CD4-positive, alpha-beta memory T cell (primary cell): ENCODE measurements at regions of chr11 and their contacts with region 1.

Region 1: GRCh38 chr11:63838678-63839507 is at the start of gene MARK2:
- DNase-seq: peak; percentile 99 to 100 (median 99)
- H3K4me3 ChIP-seq: peak within 1 kb of the TSS; percentile 87 to 88
- H3K4me3 Mint-ChIP-seq: peak within 1 kb of the TSS; percentile 87 to 95 (median 91)
- H3K27ac ChIP-seq: peak within 1 kb of the TSS; percentile 86
- H3K27ac Mint-ChIP-seq: peak within 1 kb of the TSS; percentile 85 to 97 (median 95)
- H3K4me1 ChIP-seq: peaks cover 48% of the 10 kb centered on the region
- H3K4me1 Mint-ChIP-seq: peaks cover 40 to 72% (median 54%) of the 10 kb centered on the region in 4 donors
- H3K27me3 ChIP-seq: no peaks in the 10 kb centered on the region
- H3K27me3 Mint-ChIP-seq: no peaks in the 10 kb centered on the region
- total RNA-seq, gene MARK2: 60.4 to 68.0 TPM

Region 2: GRCh38 chr11:63635762-63636465 is 203.0 kb before region 1 on chr11:
- CTCF ChIA-PET with region 1: no interaction called
- POLR2A ChIA-PET with region 1: no interaction called
- intact Hi-C with region 1: no loop called
- DNase-seq: peak; percentile 56 to 69 (median 66)
- H3K4me3 ChIP-seq: no peak overlapping the region
- H3K4me3 Mint-ChIP-seq: no peak overlapping the region
- H3K27ac ChIP-seq: no peak overlapping the region
- H3K27ac Mint-ChIP-seq: peak overlapping the region in 1 of 7 donors; percentile 7
- H3K4me1 ChIP-seq: no peaks in the 10 kb centered on the region
- H3K4me1 Mint-ChIP-seq: peaks cover 10 to 14% (median 10%) of the 10 kb centered on the region in 4 donors
- H3K27me3 ChIP-seq: no peaks in the 10 kb centered on the region
- H3K27me3 Mint-ChIP-seq: no peaks in the 10 kb centered on the region

Region 3: GRCh38 chr11:63768237-63769043 is 70.5 kb before region 1 on chr11 and contains the start of gene ZFTA:
- CTCF ChIA-PET with region 1: interaction called, 7 read pairs
- POLR2A ChIA-PET with region 1: interaction called, 4 read pairs
- intact Hi-C with region 1: loop called (anchors 5 kb)
- DNase-seq: peak; percentile 43 to 57 (median 49)
- H3K4me3 ChIP-seq: peak within 1 kb of the TSS; percentile 83 to 94
- H3K4me3 Mint-ChIP-seq: peak within 1 kb of the TSS; percentile 87 to 100 (median 94)
- H3K27ac ChIP-seq: peak within 1 kb of the TSS; percentile 8
- H3K27ac Mint-ChIP-seq: peak within 1 kb of the TSS; percentile 69 to 94 (median 83)
- H3K4me1 ChIP-seq: peaks cover 13% of the 10 kb centered on the region
- H3K4me1 Mint-ChIP-seq: peaks cover 3 to 18% (median 7%) of the 10 kb centered on the region in 4 donors
- H3K27me3 ChIP-seq: peaks cover 6% of the 10 kb centered on the region
- H3K27me3 Mint-ChIP-seq: peaks cover 4 to 14% of the 10 kb centered on the region in 2 donors
- total RNA-seq, gene ZFTA: 1.4 to 1.7 TPM

Region 4: GRCh38 chr11:63871962-63872799 is 33.3 kb after region 1 on chr11:
- CTCF ChIA-PET with region 1: interaction called, 37 read pairs
- POLR2A ChIA-PET with region 1: interaction called, 46 read pairs
- intact Hi-C with region 1: loop called (anchors 2 kb)
- DNase-seq: peak in 2 of 5 donors; percentile 43 to 60
- H3K4me3 ChIP-seq: no peak overlapping the region
- H3K4me3 Mint-ChIP-seq: peak overlapping the region in 7 of 8 donors; percentile 36 to 76 (median 46)
- H3K27ac ChIP-seq: peak overlapping the region; percentile 2
- H3K27ac Mint-ChIP-seq: peak overlapping the region in 6 of 7 donors; percentile 12 to 89 (median 44)
- H3K4me1 ChIP-seq: peaks cover 87% of the 10 kb centered on the region
- H3K4me1 Mint-ChIP-seq: peaks cover 47 to 82% (median 68%) of the 10 kb centered on the region in 4 donors
- H3K27me3 ChIP-seq: no peaks in the 10 kb centered on the region
- H3K27me3 Mint-ChIP-seq: no peaks in the 10 kb centered on the region

Region 5: GRCh38 chr11:63897459-63898146 is 58.7 kb after region 1 on chr11:
- CTCF ChIA-PET with region 1: interaction called, 39 read pairs
- POLR2A ChIA-PET with region 1: interaction called, 83 read pairs
- intact Hi-C with region 1: no loop called
- DNase-seq: no peak
- H3K4me3 ChIP-seq: no peak overlapping the region
- H3K4me3 Mint-ChIP-seq: no peak overlapping the region
- H3K27ac ChIP-seq: no peak overlapping the region
- H3K27ac Mint-ChIP-seq: peak overlapping the region in 2 of 7 donors; percentile 41 to 50
- H3K4me1 ChIP-seq: peaks cover 23% of the 10 kb centered on the region
- H3K4me1 Mint-ChIP-seq: peaks cover 20 to 33% (median 26%) of the 10 kb centered on the region in 4 donors
- H3K27me3 ChIP-seq: no peaks in the 10 kb centered on the region
- H3K27me3 Mint-ChIP-seq: no peaks in the 10 kb centered on the region

Region 6: GRCh38 chr11:63938479-63939396 is 99.8 kb after region 1 on chr11 and contains the start of gene NAA40:
- CTCF ChIA-PET with region 1: interaction called, 337 read pairs
- POLR2A ChIA-PET with region 1: interaction called, 10 read pairs
- intact Hi-C with region 1: loop called (anchors 1 kb)
- DNase-seq: peak; percentile 89 to 92 (median 90)
- H3K4me3 ChIP-seq: peak within 1 kb of the TSS; percentile 62 to 81
- H3K4me3 Mint-ChIP-seq: peak within 1 kb of the TSS; percentile 90 to 98 (median 94)
- H3K27ac ChIP-seq: peak within 1 kb of the TSS; percentile 64
- H3K27ac Mint-ChIP-seq: peak within 1 kb of the TSS; percentile 88 to 98 (median 90)
- H3K4me1 ChIP-seq: peaks cover 22% of the 10 kb centered on the region
- H3K4me1 Mint-ChIP-seq: peaks cover 17 to 27% (median 20%) of the 10 kb centered on the region in 4 donors
- H3K27me3 ChIP-seq: no peaks in the 10 kb centered on the region
- H3K27me3 Mint-ChIP-seq: no peaks in the 10 kb centered on the region
- total RNA-seq, gene NAA40: 24.2 to 24.8 TPM

Region 7: GRCh38 chr11:63986156-63986931 is 147.5 kb after region 1 on chr11 and contains the start of gene OTUB1:
- CTCF ChIA-PET with region 1: interaction called, 4 read pairs
- POLR2A ChIA-PET with region 1: interaction called, 12 read pairs
- intact Hi-C with region 1: loop called (anchors 1 kb)
- DNase-seq: peak; percentile 82 to 90 (median 84)
- H3K4me3 ChIP-seq: peak within 1 kb of the TSS; percentile 82 to 96
- H3K4me3 Mint-ChIP-seq: peak within 1 kb of the TSS; percentile 94 to 99 (median 97)
- H3K27ac ChIP-seq: peak within 1 kb of the TSS; percentile 96
- H3K27ac Mint-ChIP-seq: peak within 1 kb of the TSS; percentile 97 to 99 (median 98)
- H3K4me1 ChIP-seq: peaks cover 25% of the 10 kb centered on the region
- H3K4me1 Mint-ChIP-seq: peaks cover 13 to 31% (median 23%) of the 10 kb centered on the region in 4 donors
- H3K27me3 ChIP-seq: no peaks in the 10 kb centered on the region
- H3K27me3 Mint-ChIP-seq: no peaks in the 10 kb centered on the region
- total RNA-seq, gene OTUB1: 72.9 to 73.0 TPM

Region 8: DNA sequence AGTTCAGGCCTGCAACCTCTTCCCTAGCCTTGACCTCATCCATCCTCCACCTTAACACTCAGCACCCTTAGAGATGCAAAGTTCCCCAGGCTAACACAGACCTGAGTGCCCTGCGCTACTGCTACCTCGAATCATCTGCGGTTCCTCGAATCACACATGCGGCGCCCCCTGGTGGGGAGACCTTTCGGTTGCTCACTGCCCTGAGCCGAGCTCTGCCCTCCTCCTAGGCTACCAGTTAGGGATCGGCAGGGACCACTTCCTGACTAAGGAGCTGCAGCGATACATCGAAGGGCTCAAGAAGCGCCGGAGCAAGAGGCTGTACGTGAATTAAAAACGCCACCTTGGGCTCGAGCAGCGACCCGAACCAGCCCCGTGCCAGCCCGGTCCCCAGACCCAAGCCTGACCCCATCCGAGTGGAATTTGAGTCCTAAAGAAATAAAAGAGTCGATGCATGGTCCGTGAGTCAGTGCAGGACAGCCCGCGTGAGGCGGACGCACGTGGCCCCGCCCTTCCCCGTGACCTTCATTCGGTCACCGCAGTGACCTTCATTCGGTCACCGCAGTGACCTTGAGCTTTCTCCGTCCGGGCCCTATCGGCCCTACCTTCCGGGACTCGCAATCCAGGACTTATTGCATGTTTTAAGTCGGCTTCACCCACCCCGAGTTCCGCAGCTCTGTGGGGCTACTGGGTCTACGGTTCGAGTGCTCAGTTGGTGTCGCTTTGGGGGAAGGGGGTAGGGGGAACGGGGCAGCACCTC is 465.6 kb after region 1 on chr11:
- CTCF ChIA-PET with region 1: no interaction called
- POLR2A ChIA-PET with region 1: interaction called, 3 read pairs
- intact Hi-C with region 1: loop called (anchors 2 kb)
- DNase-seq: peak; percentile 87 to 90 (median 88)
- H3K4me3 ChIP-seq: peak overlapping the region; percentile 64
- H3K4me3 Mint-ChIP-seq: peak overlapping the region; percentile 88 to 97 (median 94)
- H3K27ac ChIP-seq: peak overlapping the region; percentile 90
- H3K27ac Mint-ChIP-seq: peak overlapping the region; percentile 91 to 99 (median 96)
- H3K4me1 ChIP-seq: peaks cover 41% of the 10 kb centered on the region
- H3K4me1 Mint-ChIP-seq: peaks cover 20 to 48% (median 31%) of the 10 kb centered on the region in 4 donors
- H3K27me3 ChIP-seq: peaks cover 20% of the 10 kb centered on the region
- H3K27me3 Mint-ChIP-seq: peaks cover 10 to 12% of the 10 kb centered on the region in 2 donors